ENCODE measurements at regions of chr2 and their contacts with region 1.

Region 1: GRCh38 chr2:121649596-121650314 is 493 bp upstream of the CLASP1 start:
- DNase-seq: peak; percentile 95
- H3K4me3 ChIP-seq: peak overlapping the region; percentile 56
- H3K4me3 Mint-ChIP-seq: peak overlapping the region; percentile 78
- H3K27ac Mint-ChIP-seq: peak overlapping the region; percentile 95
- H3K4me1 ChIP-seq: 0 out of 2 replicates have a peak, but pooled peaks cover 10% of the 10 kb centered on the region
- H3K4me1 Mint-ChIP-seq: peaks cover 15% of the 10 kb centered on the region
- H3K27me3 ChIP-seq: no peaks in the 10 kb centered on the region
- H3K27me3 Mint-ChIP-seq: no peaks in the 10 kb centered on the region
- CTCF ChIP-seq: no peak

Region 2: DNA sequence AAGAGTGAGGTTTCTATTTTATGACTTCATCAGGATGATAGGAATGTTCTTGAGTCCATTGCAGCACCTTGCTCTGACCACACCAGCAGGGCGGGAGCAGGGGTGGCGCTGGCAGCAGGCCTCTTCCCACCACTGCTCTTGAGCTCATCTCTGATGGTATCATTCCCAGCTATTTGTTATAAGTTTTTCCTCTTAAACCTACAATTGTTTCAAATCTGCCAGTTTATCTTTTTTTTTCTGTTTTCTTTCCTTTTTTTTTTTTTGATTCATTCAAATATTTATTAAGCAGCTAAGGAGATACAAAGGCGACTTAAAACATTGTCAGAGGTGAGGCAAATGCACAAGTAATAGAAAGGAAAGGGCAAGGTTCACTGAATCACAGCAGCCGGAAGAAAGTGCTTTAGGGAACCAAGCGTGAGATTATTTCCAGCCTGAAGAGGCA is 58.2 kb after region 1 on chr2:
- CTCF ChIA-PET with region 1: interaction called, 3 read pairs
- POLR2A ChIA-PET with region 1: interaction called, 10 read pairs
- intact Hi-C with region 1: loop called (anchors 2 kb)
- DNase-seq: peak; percentile 78 to 82
- H3K4me3 ChIP-seq: peak overlapping the region; percentile 11; the same call in 1 of the 2 replicates
- H3K4me3 Mint-ChIP-seq: peak overlapping the region; percentile 72
- H3K27ac Mint-ChIP-seq: peak overlapping the region; percentile 96
- H3K4me1 ChIP-seq: peaks cover 17% of the 10 kb centered on the region; the same call in 1 of the 2 replicates
- H3K4me1 Mint-ChIP-seq: peaks cover 27% of the 10 kb centered on the region
- H3K27me3 ChIP-seq: no peaks in the 10 kb centered on the region
- H3K27me3 Mint-ChIP-seq: no peaks in the 10 kb centered on the region
- CTCF ChIP-seq: no peak